PC-9 (cell line): ENCODE measurements at regions of chr17 and their contacts with region 1.

Region 1: GRCh38 chr17:48215583-48216139 is 108.1 kb downstream of the SNX11 start:
- DNase-seq: peak; percentile 40 to 52
- H3K4me3 ChIP-seq: no peak overlapping the region
- H3K27ac ChIP-seq: no peak overlapping the region
- H3K4me1 ChIP-seq: no peaks in the 10 kb centered on the region
- H3K27me3 ChIP-seq: no peaks in the 10 kb centered on the region
- CTCF ChIP-seq: peak; percentile 88

Region 2: GRCh38 chr17:48270896-48271295 is 55.2 kb after region 1 on chr17:
- CTCF ChIA-PET with region 1: interaction called, 19 read pairs
- POLR2A ChIA-PET with region 1: no interaction called
- intact Hi-C with region 1: no loop called
- DNase-seq: no peak
- H3K4me3 ChIP-seq: no peak overlapping the region
- H3K27ac ChIP-seq: no peak overlapping the region
- H3K4me1 ChIP-seq: peaks cover 5% of the 10 kb centered on the region; the same call in 1 of the 2 replicates
- H3K27me3 ChIP-seq: no peaks in the 10 kb centered on the region
- CTCF ChIP-seq: no peak

Region 3: GRCh38 chr17:48457080-48457836 is 241.6 kb after region 1 on chr17:
- CTCF ChIA-PET with region 1: no interaction called
- POLR2A ChIA-PET with region 1: no interaction called
- intact Hi-C with region 1: no loop called
- DNase-seq: peak; percentile 44 to 51
- H3K4me3 ChIP-seq: peak overlapping the region; percentile 27; the same call in 1 of the 2 replicates
- H3K27ac ChIP-seq: no peak overlapping the region
- H3K4me1 ChIP-seq: 0 out of 2 replicates have a peak, but pooled peaks cover 11% of the 10 kb centered on the region
- H3K27me3 ChIP-seq: no peaks in the 10 kb centered on the region
- CTCF ChIP-seq: peak; percentile 98